Gastrocnemius medialis (tissue), 4 donors: ENCODE measurements at regions of chr2 and their contacts with region 1.

Region 1: GRCh38 chr2:65957886-65958285 is 477.0 kb upstream of the MEIS1 start:
- DNase-seq: no peak
- ATAC-seq: no peak
- H3K4me3 ChIP-seq: no peak overlapping the region
- H3K27ac ChIP-seq: no peak overlapping the region
- H3K4me1 ChIP-seq: no peaks in the 10 kb centered on the region
- H3K27me3 ChIP-seq: no peaks in the 10 kb centered on the region
- CTCF ChIP-seq: no peak
- POLR2A ChIP-seq: no peak

Region 2: GRCh38 chr2:65974067-65974723 is 16.3 kb after region 1 on chr2:
- in situ Hi-C with region 1: no loop called
- intact Hi-C with region 1: loop called (anchors 2 kb)
- DNase-seq: no peak
- ATAC-seq: no peak
- H3K4me3 ChIP-seq: no peak overlapping the region
- H3K27ac ChIP-seq: no peak overlapping the region
- H3K4me1 ChIP-seq: no peaks in the 10 kb centered on the region
- H3K27me3 ChIP-seq: no peaks in the 10 kb centered on the region
- CTCF ChIP-seq: no peak
- POLR2A ChIP-seq: no peak

Region 3: GRCh38 chr2:66050379-66050778 is 92.5 kb after region 1 on chr2:
- in situ Hi-C with region 1: no loop called
- intact Hi-C with region 1: no loop called
- DNase-seq: no peak
- ATAC-seq: no peak
- H3K4me3 ChIP-seq: no peak overlapping the region
- H3K27ac ChIP-seq: no peak overlapping the region
- H3K4me1 ChIP-seq: no peaks in the 10 kb centered on the region
- H3K27me3 ChIP-seq: no peaks in the 10 kb centered on the region
- CTCF ChIP-seq: no peak
- POLR2A ChIP-seq: no peak